ENCODE measurements at regions of chr6 and their contacts with region 1.

Region 1: DNA sequence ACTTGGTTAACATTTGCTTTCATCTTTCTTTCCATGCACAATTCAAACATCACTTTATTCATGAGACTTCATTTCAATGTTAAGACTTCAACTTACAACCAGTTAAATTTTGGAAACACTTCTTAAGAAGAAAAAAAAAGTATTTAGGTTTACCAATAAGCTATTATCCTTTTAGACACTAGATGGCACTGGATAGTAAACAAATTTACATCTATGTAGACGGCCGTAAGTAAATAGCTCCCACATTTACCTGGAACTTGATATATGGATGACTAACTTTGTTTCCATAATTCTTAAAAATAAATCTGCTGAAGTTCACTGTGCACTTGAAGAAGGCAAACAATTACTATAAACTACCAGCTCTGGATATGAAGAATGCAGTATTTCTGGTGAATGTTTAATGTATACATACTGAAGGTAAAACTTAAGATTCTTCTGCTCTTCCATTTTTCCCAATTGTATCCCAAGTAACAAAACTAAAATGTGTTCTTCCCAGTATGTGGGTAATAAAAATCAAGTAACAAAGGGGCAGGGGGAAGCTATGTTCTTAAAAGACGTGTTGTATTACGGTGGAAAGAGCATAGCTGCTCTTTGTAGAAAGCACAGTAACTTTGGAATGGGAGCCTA is 130.6 kb upstream of the C6orf118 start:
- DNase-seq: peak; percentile 75
- H3K4me3 ChIP-seq: no peak overlapping the region
- H3K27ac ChIP-seq: no peak overlapping the region
- H3K4me1 ChIP-seq: no peaks in the 10 kb centered on the region
- H3K27me3 ChIP-seq: no peaks in the 10 kb centered on the region
- CTCF ChIP-seq: peak; percentile 35 to 38
- POLR2A ChIP-seq: no peak

Region 2: GRCh38 chr6:165426892-165427291 is 13.1 kb before region 1 on chr6:
- CTCF ChIA-PET with region 1: interaction called, 16 read pairs
- POLR2A ChIA-PET with region 1: no interaction called
- dilution Hi-C with region 1: no loop called
- intact Hi-C with region 1: no loop called
- DNase-seq: no peak
- H3K4me3 ChIP-seq: no peak overlapping the region
- H3K27ac ChIP-seq: no peak overlapping the region
- H3K4me1 ChIP-seq: no peaks in the 10 kb centered on the region
- H3K27me3 ChIP-seq: no peaks in the 10 kb centered on the region
- CTCF ChIP-seq: no peak
- POLR2A ChIP-seq: no peak

Region 3: GRCh38 chr6:165636402-165637048 is 196.5 kb after region 1 on chr6:
- CTCF ChIA-PET with region 1: interaction called, 34 read pairs
- POLR2A ChIA-PET with region 1: no interaction called
- dilution Hi-C with region 1: no loop called
- intact Hi-C with region 1: no loop called
- DNase-seq: peak; percentile 64
- H3K4me3 ChIP-seq: no peak overlapping the region
- H3K27ac ChIP-seq: no peak overlapping the region
- H3K4me1 ChIP-seq: no peaks in the 10 kb centered on the region
- H3K27me3 ChIP-seq: peaks cover 0 to 2% of the 10 kb centered on the region in 2 experiments
- CTCF ChIP-seq: no peak
- POLR2A ChIP-seq: no peak

Region 4: GRCh38 chr6:165676435-165677068 is 236.5 kb after region 1 on chr6:
- CTCF ChIA-PET with region 1: interaction called, 48 read pairs
- POLR2A ChIA-PET with region 1: no interaction called
- dilution Hi-C with region 1: no loop called
- intact Hi-C with region 1: loop called (anchors 1 kb)
- DNase-seq: peak; percentile 89
- H3K4me3 ChIP-seq: no peak overlapping the region
- H3K27ac ChIP-seq: peak overlapping the region; percentile 25
- H3K4me1 ChIP-seq: peaks cover 9% of the 10 kb centered on the region
- H3K27me3 ChIP-seq: no peaks in the 10 kb centered on the region
- CTCF ChIP-seq: peak; percentile 32 to 68
- POLR2A ChIP-seq: no peak

Region 5: DNA sequence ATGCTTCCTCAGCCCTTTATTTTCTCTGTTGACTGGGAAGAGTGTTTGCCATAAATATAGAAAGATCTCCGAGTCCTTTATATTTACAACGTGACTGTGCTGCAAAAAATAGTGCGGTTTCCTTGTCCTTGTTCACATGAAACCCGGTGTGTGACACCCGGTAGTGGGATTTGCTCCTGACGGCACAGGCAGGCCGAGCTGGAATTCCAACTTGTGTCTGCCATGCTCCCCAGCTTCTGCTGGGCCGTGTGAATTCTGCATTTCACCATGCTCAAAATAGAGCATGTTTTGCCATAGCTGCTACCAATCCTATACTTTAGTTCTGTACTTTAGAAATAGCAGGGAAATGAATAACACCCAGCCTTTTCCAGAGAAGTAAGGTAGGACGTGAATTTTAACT is 283.3 kb after region 1 on chr6:
- CTCF ChIA-PET with region 1: interaction called, 95 read pairs
- POLR2A ChIA-PET with region 1: no interaction called
- dilution Hi-C with region 1: no loop called
- intact Hi-C with region 1: no loop called
- DNase-seq: no peak
- H3K4me3 ChIP-seq: no peak overlapping the region
- H3K27ac ChIP-seq: no peak overlapping the region
- H3K4me1 ChIP-seq: peaks cover 4% of the 10 kb centered on the region
- H3K27me3 ChIP-seq: peaks cover 2 to 3% of the 10 kb centered on the region in 2 experiments
- CTCF ChIP-seq: no peak
- POLR2A ChIP-seq: no peak

Region 6: GRCh38 chr6:165774903-165775601 is 335.0 kb after region 1 on chr6:
- CTCF ChIA-PET with region 1: interaction called, 16 read pairs
- POLR2A ChIA-PET with region 1: no interaction called
- dilution Hi-C with region 1: no loop called
- intact Hi-C with region 1: loop called (anchors 2 kb)
- DNase-seq: peak; percentile 99
- H3K4me3 ChIP-seq: peak overlapping the region in 1 of 3 experiments; percentile 5
- H3K27ac ChIP-seq: peak overlapping the region; percentile 92
- H3K4me1 ChIP-seq: peaks cover 12% of the 10 kb centered on the region
- H3K27me3 ChIP-seq: peaks cover 0 to 1% of the 10 kb centered on the region in 2 experiments
- CTCF ChIP-seq: no peak
- POLR2A ChIP-seq: no peak

Region 7: DNA sequence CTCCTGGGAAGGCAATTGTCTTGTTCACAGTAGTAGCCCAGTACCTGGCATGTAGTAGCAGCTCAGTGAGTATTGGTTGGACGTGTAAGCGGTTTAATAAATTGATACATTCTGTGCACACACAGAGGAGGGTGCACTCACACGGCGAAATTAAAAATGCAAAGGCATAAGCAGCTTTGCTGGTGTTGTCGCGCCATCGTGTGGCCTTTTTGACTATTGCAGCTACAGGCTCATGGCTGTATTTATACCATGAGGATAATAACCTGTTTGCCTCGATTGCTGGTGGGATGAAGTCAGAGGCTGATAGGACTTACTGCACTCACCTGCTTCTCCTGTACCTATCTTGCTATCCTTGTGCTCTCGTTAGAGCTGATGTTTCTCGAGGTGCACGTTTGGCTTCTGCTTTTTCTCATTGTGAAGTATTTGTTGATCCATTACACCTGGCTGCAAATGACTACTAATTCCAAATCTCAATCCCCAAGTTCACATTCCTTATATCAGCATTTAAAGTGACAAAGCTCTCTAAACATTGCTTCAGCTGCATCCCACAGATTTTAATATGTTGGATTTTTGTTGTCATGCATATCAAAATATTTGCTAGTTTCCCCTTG is 666.1 kb after region 1 on chr6:
- CTCF ChIA-PET with region 1: interaction called, 5 read pairs
- POLR2A ChIA-PET with region 1: no interaction called
- dilution Hi-C with region 1: no loop called
- intact Hi-C with region 1: loop called (anchors 10 kb)
- DNase-seq: peak; percentile 49
- H3K4me3 ChIP-seq: no peak overlapping the region
- H3K27ac ChIP-seq: no peak overlapping the region
- H3K4me1 ChIP-seq: no peaks in the 10 kb centered on the region
- H3K27me3 ChIP-seq: no peaks in the 10 kb centered on the region
- CTCF ChIP-seq: peak; percentile 69 to 71
- POLR2A ChIP-seq: no peak

Region 8: DNA sequence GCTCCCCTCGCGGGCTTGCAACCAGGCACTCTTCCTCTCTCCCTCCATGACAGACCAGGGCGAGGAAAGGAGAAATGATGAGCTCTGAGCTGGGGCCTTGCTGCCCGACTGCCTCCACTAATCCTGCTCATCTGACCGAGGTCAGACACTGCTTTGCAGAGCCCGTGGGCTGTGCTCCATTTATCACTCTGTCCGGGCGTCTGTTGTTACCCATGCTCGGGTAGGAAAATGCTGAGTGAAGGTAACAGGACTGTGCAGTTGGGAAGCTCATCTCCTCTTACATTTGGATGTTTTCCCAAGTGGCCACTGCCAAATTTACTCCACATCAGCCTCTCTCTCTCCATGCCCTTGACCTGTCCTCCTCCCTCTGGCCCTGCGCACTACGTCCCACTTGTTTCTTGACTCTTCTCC is 1172.4 kb after region 1 on chr6:
- CTCF ChIA-PET with region 1: no interaction called
- POLR2A ChIA-PET with region 1: no interaction called
- dilution Hi-C with region 1: no loop called
- intact Hi-C with region 1: no loop called
- DNase-seq: no peak
- H3K4me3 ChIP-seq: no peak overlapping the region
- H3K27ac ChIP-seq: no peak overlapping the region
- H3K4me1 ChIP-seq: peaks cover 41% of the 10 kb centered on the region
- H3K27me3 ChIP-seq: no peaks in the 10 kb centered on the region
- CTCF ChIP-seq: no peak
- POLR2A ChIP-seq: no peak

Measured in endothelial cell of umbilical vein (primary cell).